CD8-positive, alpha-beta T cell (primary cell): ENCODE measurements at regions of chr22 and their contacts with region 1.

Region 1: GRCh38 chr22:36194971-36195370 is 6.6 kb downstream of the APOL4 start:
- DNase-seq: peak; percentile 4 to 63 (median 41)
- ATAC-seq: peak; percentile 59
- H3K4me3 ChIP-seq: no peak overlapping the region
- H3K4me3 Mint-ChIP-seq: no peak overlapping the region
- H3K27ac ChIP-seq: no peak overlapping the region
- H3K27ac Mint-ChIP-seq: no peak overlapping the region
- H3K4me1 ChIP-seq: peaks cover 11% of the 10 kb centered on the region
- H3K4me1 Mint-ChIP-seq: peaks cover 22% of the 10 kb centered on the region
- H3K27me3 ChIP-seq: no peaks in the 10 kb centered on the region
- H3K27me3 Mint-ChIP-seq: peaks cover 2% of the 10 kb centered on the region
- CTCF ChIP-seq: peak; percentile 56

Region 2: DNA sequence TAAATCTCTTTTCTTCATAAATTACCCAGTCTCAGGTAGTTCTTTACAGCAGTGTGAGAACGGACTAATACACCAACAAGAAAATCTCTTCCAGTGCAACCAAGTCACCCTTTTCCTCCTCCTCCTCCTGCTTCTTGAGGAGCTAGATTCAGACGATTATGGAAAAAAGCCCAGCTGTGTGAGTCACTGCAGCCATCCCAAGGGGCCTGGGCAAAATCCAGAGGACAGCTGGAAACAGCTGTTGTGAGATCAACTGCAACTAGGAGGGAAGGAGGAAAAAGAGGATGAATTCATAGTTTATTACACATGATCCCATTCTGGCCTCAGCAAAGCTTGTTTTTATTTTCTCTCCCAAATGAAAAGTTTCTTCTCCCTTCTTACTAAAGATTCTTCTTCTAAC is 199.2 kb before region 1 on chr22:
- CTCF ChIA-PET with region 1: no interaction called
- POLR2A ChIA-PET with region 1: no interaction called
- intact Hi-C with region 1: no loop called
- DNase-seq: no peak
- ATAC-seq: no peak
- H3K4me3 ChIP-seq: no peak overlapping the region
- H3K4me3 Mint-ChIP-seq: no peak overlapping the region
- H3K27ac ChIP-seq: no peak overlapping the region
- H3K27ac Mint-ChIP-seq: no peak overlapping the region
- H3K4me1 ChIP-seq: no peaks in the 10 kb centered on the region
- H3K4me1 Mint-ChIP-seq: no peaks in the 10 kb centered on the region
- H3K27me3 ChIP-seq: peaks cover 0 to 5% of the 10 kb centered on the region in 2 experiments
- H3K27me3 Mint-ChIP-seq: no peaks in the 10 kb centered on the region
- CTCF ChIP-seq: no peak

Region 3: GRCh38 chr22:36123673-36124630 is 71.0 kb before region 1 on chr22:
- CTCF ChIA-PET with region 1: no interaction called
- POLR2A ChIA-PET with region 1: no interaction called
- intact Hi-C with region 1: no loop called
- DNase-seq: peak; percentile 80 to 97 (median 94)
- ATAC-seq: peak; percentile 99
- H3K4me3 ChIP-seq: peak overlapping the region; percentile 49 to 54
- H3K4me3 Mint-ChIP-seq: peak overlapping the region; percentile 89
- H3K27ac ChIP-seq: peak overlapping the region; percentile 41 to 71
- H3K27ac Mint-ChIP-seq: peak overlapping the region; percentile 98
- H3K4me1 ChIP-seq: peaks cover 9% of the 10 kb centered on the region
- H3K4me1 Mint-ChIP-seq: peaks cover 13% of the 10 kb centered on the region
- H3K27me3 ChIP-seq: no peaks in the 10 kb centered on the region
- H3K27me3 Mint-ChIP-seq: no peaks in the 10 kb centered on the region
- CTCF ChIP-seq: peak; percentile 95

Region 4: GRCh38 chr22:36221799-36222751 is 27.1 kb after region 1 on chr22:
- CTCF ChIA-PET with region 1: interaction called, 4 read pairs
- POLR2A ChIA-PET with region 1: no interaction called
- intact Hi-C with region 1: loop called (anchors 1 to 2 kb)
- DNase-seq: peak in 7 of 9 experiments; percentile 42 to 70 (median 61)
- ATAC-seq: peak; percentile 85
- H3K4me3 ChIP-seq: no peak overlapping the region
- H3K4me3 Mint-ChIP-seq: peak overlapping the region; percentile 60
- H3K27ac ChIP-seq: no peak overlapping the region
- H3K27ac Mint-ChIP-seq: no peak overlapping the region
- H3K4me1 ChIP-seq: peaks cover 4% of the 10 kb centered on the region
- H3K4me1 Mint-ChIP-seq: peaks cover 7% of the 10 kb centered on the region
- H3K27me3 ChIP-seq: no peaks in the 10 kb centered on the region
- H3K27me3 Mint-ChIP-seq: peaks cover 5% of the 10 kb centered on the region
- CTCF ChIP-seq: peak; percentile 66

Region 5: GRCh38 chr22:36277482-36278291 is 82.7 kb after region 1 on chr22:
- CTCF ChIA-PET with region 1: interaction called, 3 read pairs
- POLR2A ChIA-PET with region 1: no interaction called
- intact Hi-C with region 1: loop called (anchors 1 to 2 kb)
- DNase-seq: peak; percentile 44 to 84 (median 64)
- ATAC-seq: peak; percentile 85
- H3K4me3 ChIP-seq: no peak overlapping the region
- H3K4me3 Mint-ChIP-seq: peak overlapping the region; percentile 11
- H3K27ac ChIP-seq: peak overlapping the region in 1 of 2 experiments; percentile 30
- H3K27ac Mint-ChIP-seq: peak overlapping the region; percentile 50
- H3K4me1 ChIP-seq: peaks cover 21% of the 10 kb centered on the region
- H3K4me1 Mint-ChIP-seq: peaks cover 18% of the 10 kb centered on the region
- H3K27me3 ChIP-seq: no peaks in the 10 kb centered on the region
- H3K27me3 Mint-ChIP-seq: no peaks in the 10 kb centered on the region
- CTCF ChIP-seq: peak; percentile 73

Region 6: DNA sequence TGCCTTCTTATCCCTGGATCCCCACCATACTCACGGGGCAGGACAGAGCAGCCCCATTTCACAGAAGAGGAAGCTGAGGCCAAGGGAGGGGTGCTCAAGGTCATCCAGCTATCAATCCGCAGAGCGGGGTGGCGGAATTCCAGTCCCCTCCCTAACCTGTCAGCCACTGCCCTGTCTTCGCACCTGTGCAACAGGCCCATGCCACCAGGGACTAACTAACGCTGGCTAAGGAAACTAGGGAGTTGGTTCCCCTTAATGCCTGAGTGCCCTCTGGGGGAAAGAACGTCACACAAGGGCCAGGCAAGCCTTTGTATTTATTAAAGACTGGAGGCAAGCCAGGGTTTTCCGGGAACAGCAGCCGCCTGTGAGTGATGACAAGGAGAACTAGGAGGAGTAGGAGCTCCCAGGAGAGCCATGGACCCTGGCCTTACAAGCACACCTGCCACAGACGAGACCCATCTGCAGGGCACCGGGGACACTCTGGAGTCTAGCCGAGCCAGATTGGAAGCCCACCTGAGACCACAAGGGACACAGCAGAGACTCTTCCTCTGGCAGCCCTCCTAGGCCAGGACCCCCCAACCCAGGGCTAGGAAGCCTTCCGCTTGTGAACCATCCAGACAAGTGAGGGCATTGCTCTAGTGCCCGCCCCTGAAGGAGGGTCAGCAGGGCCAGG is 128.3 kb after region 1 on chr22:
- CTCF ChIA-PET with region 1: no interaction called
- POLR2A ChIA-PET with region 1: no interaction called
- intact Hi-C with region 1: no loop called
- DNase-seq: no peak
- ATAC-seq: no peak
- H3K4me3 ChIP-seq: no peak overlapping the region
- H3K4me3 Mint-ChIP-seq: no peak overlapping the region
- H3K27ac ChIP-seq: peak overlapping the region in 1 of 2 experiments; percentile 30
- H3K27ac Mint-ChIP-seq: peak overlapping the region; percentile 50
- H3K4me1 ChIP-seq: peaks cover 14% of the 10 kb centered on the region
- H3K4me1 Mint-ChIP-seq: peaks cover 23% of the 10 kb centered on the region
- H3K27me3 ChIP-seq: no peaks in the 10 kb centered on the region
- H3K27me3 Mint-ChIP-seq: no peaks in the 10 kb centered on the region
- CTCF ChIP-seq: no peak

Region 7: DNA sequence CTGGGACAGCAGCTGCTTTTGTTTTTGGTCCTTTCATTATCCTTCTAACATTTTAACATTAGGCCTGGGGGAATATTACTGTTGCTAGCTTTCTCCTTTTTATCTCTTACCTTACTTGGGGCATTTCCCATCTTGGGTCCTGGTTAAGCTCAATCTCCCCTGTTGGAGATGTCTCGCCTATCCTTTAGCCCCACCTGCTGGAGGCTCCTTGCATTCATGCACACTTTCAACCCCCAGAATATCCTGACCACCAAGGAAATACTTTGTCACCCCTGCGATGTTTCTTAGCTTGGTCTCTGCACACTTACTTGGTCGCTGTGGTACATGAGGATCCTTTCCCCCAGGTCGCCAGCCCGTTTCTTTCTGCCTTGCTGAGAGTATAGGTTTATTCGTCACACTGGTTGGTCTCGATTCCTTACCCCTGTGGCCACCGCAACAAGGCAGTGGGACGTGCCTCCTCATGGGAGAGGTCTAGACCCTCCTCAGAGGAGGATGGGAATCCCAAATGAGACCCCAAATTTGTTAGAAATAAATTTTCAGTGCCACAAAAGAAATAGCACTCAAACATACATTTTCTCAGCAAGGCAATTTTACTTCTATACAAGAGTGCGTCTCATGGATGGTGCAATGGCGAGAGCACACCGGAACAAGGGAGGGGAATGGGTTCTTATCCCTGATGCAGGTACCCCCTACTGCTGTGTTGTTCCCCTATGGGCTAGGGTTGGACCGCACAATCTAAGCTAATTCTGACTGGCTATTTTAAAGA is 291.8 kb after region 1 on chr22:
- CTCF ChIA-PET with region 1: interaction called, 25 read pairs
- POLR2A ChIA-PET with region 1: no interaction called
- intact Hi-C with region 1: no loop called
- DNase-seq: peak; percentile 31 to 84 (median 71)
- ATAC-seq: no peak
- H3K4me3 ChIP-seq: no peak overlapping the region
- H3K4me3 Mint-ChIP-seq: no peak overlapping the region
- H3K27ac ChIP-seq: no peak overlapping the region
- H3K27ac Mint-ChIP-seq: no peak overlapping the region
- H3K4me1 ChIP-seq: peaks cover 3% of the 10 kb centered on the region
- H3K4me1 Mint-ChIP-seq: peaks cover 5% of the 10 kb centered on the region
- H3K27me3 ChIP-seq: no peaks in the 10 kb centered on the region
- H3K27me3 Mint-ChIP-seq: no peaks in the 10 kb centered on the region
- CTCF ChIP-seq: peak; percentile 62